ENCODE measurements at regions of chr5 and their contacts with region 1.

Region 1: GRCh38 chr5:75049456-75050351 is 2.7 kb downstream of the GCNT4 start:
- DNase-seq: no peak
- H3K4me3 ChIP-seq: no peak overlapping the region
- H3K27me3 ChIP-seq: no peaks in the 10 kb centered on the region
- CTCF ChIP-seq: peak; percentile 80

Region 2: GRCh38 chr5:74919487-74919886 is 130.2 kb before region 1 on chr5:
- CTCF ChIA-PET with region 1: interaction called, 13 read pairs
- POLR2A ChIA-PET with region 1: no interaction called
- DNase-seq: no peak
- H3K4me3 ChIP-seq: no peak overlapping the region
- H3K27me3 ChIP-seq: 0 out of 2 replicates have a peak, but pooled peaks cover 1% of the 10 kb centered on the region
- CTCF ChIP-seq: peak; percentile 57

Region 3: DNA sequence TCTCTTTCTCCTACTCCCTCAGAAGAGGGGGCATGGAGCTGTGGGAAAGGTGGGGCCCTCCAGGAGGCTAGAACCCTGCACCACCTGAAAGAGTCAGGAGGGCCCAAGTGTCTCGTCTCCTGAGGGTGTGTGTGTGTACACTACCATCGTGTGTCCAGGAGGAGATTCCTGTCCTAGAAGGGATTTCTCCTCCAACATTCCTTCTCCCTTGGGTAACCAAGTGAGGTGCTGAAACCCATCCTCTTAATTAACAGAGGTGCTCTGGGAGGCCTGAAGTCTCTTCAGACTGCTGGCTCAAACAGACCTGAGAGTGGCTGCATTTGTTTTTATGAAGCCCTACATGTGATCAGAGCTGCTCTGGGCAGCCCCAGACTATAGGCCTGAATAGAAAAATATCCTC is 122.4 kb before region 1 on chr5:
- CTCF ChIA-PET with region 1: interaction called, 13 read pairs
- POLR2A ChIA-PET with region 1: no interaction called
- DNase-seq: no peak
- H3K4me3 ChIP-seq: no peak overlapping the region
- H3K27me3 ChIP-seq: no peaks in the 10 kb centered on the region
- CTCF ChIP-seq: no peak

Region 4: GRCh38 chr5:74934949-74935751 is 114.6 kb before region 1 on chr5:
- CTCF ChIA-PET with region 1: interaction called, 15 read pairs
- POLR2A ChIA-PET with region 1: no interaction called
- DNase-seq: peak; percentile 53
- H3K4me3 ChIP-seq: no peak overlapping the region
- H3K27me3 ChIP-seq: no peaks in the 10 kb centered on the region
- CTCF ChIP-seq: peak; percentile 54

Region 5: GRCh38 chr5:74950836-74951515 is 98.7 kb before region 1 on chr5:
- CTCF ChIA-PET with region 1: interaction called, 16 read pairs
- POLR2A ChIA-PET with region 1: no interaction called
- DNase-seq: no peak
- H3K4me3 ChIP-seq: no peak overlapping the region
- H3K27me3 ChIP-seq: no peaks in the 10 kb centered on the region
- CTCF ChIP-seq: no peak

Region 6: DNA sequence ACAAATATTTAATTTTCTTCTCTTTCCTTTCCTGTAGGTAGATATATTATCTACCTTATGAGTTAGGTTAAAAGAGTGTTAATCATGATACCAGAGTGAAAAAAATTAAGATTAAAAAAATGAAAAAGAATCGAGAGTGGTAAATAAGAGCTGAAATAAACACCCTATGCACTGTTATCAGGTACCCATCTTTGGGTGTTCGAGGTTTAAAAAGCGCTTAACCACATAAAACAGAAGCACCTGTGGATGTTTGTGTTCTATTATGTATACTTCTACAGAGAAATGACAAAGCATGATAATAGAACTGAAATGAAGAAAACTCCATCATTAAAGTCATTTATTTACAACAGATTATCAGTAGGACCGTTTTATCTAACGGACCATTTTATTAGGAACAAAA is 28.3 kb after region 1 on chr5:
- CTCF ChIA-PET with region 1: no interaction called
- POLR2A ChIA-PET with region 1: no interaction called
- DNase-seq: no peak
- H3K4me3 ChIP-seq: no peak overlapping the region
- H3K27me3 ChIP-seq: no peaks in the 10 kb centered on the region
- CTCF ChIP-seq: no peak

Measured in BJ (cell line).